Dendritic cell treated with granulocyte-macrophage colony-stimulating factor and Interleukin-4, amounts not matched to agents 40 ng/mL and 50 ng/mL, for 4 days (primary cell): ENCODE measurements at regions of chr19 and their contacts with region 1.

Region 1: GRCh38 chr19:46030812-46031550 is 8.1 kb upstream of the PGLYRP1 start:
- H3K4me3 Mint-ChIP-seq: no peak overlapping the region
- H3K27ac Mint-ChIP-seq: no peak overlapping the region
- H3K4me1 Mint-ChIP-seq: peaks cover 15% of the 10 kb centered on the region
- H3K27me3 Mint-ChIP-seq: peaks cover 40% of the 10 kb centered on the region

Region 2: DNA sequence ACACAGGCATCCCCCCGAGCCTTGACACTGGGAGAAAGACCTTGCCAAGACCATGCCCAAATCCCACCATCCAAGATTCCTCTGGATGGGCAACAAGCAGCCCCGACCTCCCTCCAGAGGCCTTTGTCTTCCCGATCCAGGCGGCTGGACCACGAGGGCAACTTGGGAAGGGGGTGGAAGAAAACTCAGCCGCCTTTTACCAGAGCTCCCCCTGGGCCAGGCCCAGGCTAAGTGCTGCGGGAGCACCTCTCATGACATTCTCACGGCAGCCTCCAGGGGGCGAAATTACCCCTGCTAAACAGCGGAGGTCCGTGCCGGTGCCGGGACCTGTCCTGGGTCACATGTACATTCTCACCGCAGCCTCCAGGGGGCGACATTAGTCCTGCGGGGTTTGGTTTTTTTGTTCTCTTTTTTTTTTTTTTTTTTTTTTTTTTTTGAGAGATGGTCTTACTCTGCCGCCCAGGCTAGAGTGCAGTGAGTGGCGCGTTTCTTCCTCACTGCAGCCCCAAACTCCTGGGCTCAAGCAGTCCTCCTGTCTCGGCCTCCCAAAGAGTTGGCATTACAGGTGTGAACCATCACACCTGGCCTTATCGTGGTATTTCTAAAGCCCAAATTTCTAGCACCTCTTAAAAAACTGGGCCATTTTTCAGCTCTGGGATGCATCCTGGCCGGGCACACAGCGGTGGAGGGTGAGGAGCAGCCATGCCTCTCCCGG is 213.8 kb before region 1 on chr19:
- intact Hi-C with region 1: no loop called
- H3K4me3 Mint-ChIP-seq: no peak overlapping the region
- H3K27ac Mint-ChIP-seq: no peak overlapping the region
- H3K4me1 Mint-ChIP-seq: peaks cover 15% of the 10 kb centered on the region
- H3K27me3 Mint-ChIP-seq: peaks cover 50% of the 10 kb centered on the region

Region 3: GRCh38 chr19:46076951-46077816 is 46.2 kb after region 1 on chr19:
- intact Hi-C with region 1: loop called (anchors 1 kb)
- H3K4me3 Mint-ChIP-seq: peak overlapping the region; percentile 45
- H3K27ac Mint-ChIP-seq: no peak overlapping the region
- H3K4me1 Mint-ChIP-seq: peaks cover 22% of the 10 kb centered on the region
- H3K27me3 Mint-ChIP-seq: peaks cover 80% of the 10 kb centered on the region

Region 4: GRCh38 chr19:46147791-46148288 is 116.9 kb after region 1 on chr19 and contains the start of gene IGFL2:
- intact Hi-C with region 1: no loop called
- H3K4me3 Mint-ChIP-seq: no peak within 1 kb of the TSS
- H3K27ac Mint-ChIP-seq: no peak within 1 kb of the TSS
- H3K4me1 Mint-ChIP-seq: no peaks in the 10 kb centered on the region
- H3K27me3 Mint-ChIP-seq: peaks cover 40% of the 10 kb centered on the region

Region 5: DNA sequence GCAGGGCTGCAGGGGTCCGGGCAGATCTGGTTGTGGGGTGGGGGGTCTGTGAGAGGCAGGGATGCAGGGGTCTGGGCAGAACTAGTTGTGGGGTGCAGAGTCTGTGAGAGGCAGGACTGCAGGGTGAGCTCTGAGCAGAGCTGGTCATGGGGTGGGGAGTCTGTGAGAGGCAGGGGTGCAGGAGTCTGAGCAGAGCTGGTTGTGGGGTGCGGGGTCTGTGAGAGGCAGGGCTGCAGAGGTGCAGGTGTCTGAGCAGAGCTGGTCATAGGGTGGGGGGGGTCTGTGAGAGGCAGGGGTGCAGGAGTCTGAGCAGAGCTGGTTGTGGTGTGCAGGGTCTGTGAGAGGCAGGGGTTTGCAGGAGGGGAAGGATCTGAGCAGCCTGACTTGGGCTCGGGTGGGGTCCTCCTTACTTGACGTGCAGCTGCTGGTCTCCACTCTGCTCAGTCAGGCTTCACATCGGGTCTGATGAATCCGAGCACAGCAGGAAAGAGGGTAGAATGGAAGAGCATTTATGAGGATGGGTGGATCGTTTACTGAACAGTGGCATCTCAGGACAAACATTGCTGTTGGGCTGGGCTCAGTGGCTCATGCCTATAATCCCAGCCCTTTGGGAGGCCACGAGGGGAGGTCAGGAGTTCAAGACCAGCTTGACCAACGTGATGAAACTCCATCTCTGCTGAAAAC is 148.2 kb after region 1 on chr19:
- intact Hi-C with region 1: no loop called
- H3K4me3 Mint-ChIP-seq: no peak overlapping the region
- H3K27ac Mint-ChIP-seq: no peak overlapping the region
- H3K4me1 Mint-ChIP-seq: peaks cover 27% of the 10 kb centered on the region
- H3K27me3 Mint-ChIP-seq: peaks cover 23% of the 10 kb centered on the region

Region 6: DNA sequence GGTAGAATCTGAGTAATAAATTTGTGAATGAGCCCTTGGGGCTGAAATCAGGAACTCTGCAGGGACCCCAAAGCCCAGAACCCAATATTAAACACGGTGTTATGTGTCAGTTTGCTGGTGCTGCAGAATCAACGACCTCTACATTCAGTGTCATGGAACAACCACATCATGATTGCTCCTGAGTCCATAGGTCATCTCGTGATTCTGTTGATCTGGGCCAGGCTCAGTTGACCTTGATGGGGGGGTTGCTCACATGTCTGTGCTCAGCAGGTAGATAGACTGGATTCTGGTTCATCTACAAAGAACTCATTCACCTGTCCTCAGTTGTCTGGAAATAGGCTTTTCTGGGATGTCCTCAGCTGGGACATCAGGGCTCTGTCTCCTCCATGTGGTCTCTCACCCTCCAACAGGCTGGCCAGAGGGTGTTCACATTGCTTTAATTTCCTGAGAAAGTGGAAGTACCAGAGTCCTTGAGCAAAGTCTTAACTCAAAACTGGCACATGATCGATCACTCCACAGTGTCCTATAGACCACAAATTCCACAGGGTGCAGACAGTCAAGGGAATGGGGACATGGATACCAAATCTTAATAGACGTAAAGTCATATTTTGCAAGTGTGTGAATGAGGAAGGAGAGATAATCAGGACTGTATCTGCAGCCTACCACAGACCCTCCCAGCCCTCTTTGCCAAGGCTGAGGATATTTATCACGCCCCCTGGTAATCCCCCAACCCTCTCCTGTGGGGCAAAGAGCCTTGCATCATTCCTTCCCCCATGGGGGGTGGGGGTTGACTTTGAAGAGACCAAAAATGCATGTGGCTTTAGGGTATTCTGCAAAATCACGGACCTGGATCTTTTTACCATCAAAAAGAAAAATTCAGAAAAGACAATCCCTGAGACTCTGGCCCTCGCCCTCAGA is 159.2 kb after region 1 on chr19:
- intact Hi-C with region 1: loop called (anchors 2 kb)
- H3K4me3 Mint-ChIP-seq: no peak overlapping the region
- H3K27ac Mint-ChIP-seq: no peak overlapping the region
- H3K4me1 Mint-ChIP-seq: peaks cover 38% of the 10 kb centered on the region
- H3K27me3 Mint-ChIP-seq: peaks cover 18% of the 10 kb centered on the region

Region 7: DNA sequence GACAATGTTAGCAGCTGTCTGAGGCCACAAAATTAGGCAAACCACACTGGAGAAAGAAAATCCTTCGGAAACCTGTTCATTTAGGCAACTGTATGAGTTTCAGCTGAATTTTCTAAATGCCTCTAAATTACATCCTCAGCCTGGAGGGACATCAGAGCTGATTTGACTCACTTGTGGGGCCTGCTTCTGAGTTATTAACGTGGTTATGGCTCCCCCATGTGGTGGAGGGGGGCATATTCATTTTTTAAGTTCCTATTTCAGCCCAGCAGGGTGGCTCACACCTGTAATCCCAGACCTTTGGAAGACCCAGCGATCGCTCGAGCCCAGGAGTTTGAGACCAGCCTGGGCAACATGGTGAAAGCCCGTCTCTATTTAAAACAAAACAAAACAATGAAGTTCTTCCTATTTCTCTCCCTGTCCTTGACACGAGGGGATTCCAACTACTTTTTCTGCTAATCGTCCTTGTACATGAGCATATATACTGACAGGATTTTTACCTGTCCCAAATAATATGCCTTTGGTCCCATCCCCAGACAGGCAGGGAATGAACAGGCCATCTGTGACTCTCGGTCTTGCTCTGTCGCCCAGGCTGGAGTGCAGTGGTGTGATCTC is 234.3 kb after region 1 on chr19:
- intact Hi-C with region 1: loop called (anchors 1 kb)
- H3K4me3 Mint-ChIP-seq: no peak overlapping the region
- H3K27ac Mint-ChIP-seq: no peak overlapping the region
- H3K4me1 Mint-ChIP-seq: peaks cover 7% of the 10 kb centered on the region
- H3K27me3 Mint-ChIP-seq: peaks cover 56% of the 10 kb centered on the region